ENCODE measurements at regions of chr22 and their contacts with region 1.

Region 1: GRCh38 chr22:38176170-38176741 is 5.4 kb downstream of the PLA2G6 start:
- DNase-seq: peak; percentile 33 to 69
- ATAC-seq: peak in 2 of 3 donors; percentile 15 to 50
- H3K4me3 ChIP-seq: no peak overlapping the region
- H3K4me3 Mint-ChIP-seq: peak overlapping the region; percentile 83
- H3K27ac ChIP-seq: peak overlapping the region; percentile 83
- H3K27ac Mint-ChIP-seq: peak overlapping the region; percentile 87 to 89
- H3K4me1 ChIP-seq: peaks cover 81% of the 10 kb centered on the region
- H3K4me1 Mint-ChIP-seq: peaks cover 62 to 72% of the 10 kb centered on the region in 2 donors
- H3K27me3 ChIP-seq: no peaks in the 10 kb centered on the region
- H3K27me3 Mint-ChIP-seq: no peaks in the 10 kb centered on the region
- CTCF ChIP-seq: no peak

Region 2: DNA sequence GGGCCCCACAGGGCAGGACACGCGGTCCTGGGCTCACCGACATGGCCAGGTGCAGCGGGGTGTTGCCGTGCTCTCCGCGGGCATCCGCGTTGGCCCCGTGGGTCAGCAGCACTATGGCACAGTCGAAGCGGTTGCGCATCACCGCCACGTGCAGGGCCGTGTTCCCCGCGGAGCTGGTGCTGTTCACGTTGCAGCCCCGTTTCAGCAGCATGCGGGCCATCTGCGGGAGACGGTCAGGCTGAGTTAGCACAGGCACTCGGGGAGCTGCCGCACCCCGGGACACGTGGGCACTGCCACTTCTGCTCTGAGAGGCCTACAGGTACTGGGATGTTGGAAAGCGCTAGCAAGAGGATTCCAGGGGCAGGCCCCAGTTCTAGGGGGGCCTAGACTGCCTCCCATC is 43.5 kb before region 1 on chr22:
- intact Hi-C with region 1: no loop called
- DNase-seq: no peak
- ATAC-seq: no peak
- H3K4me3 ChIP-seq: no peak overlapping the region
- H3K4me3 Mint-ChIP-seq: no peak overlapping the region
- H3K27ac ChIP-seq: no peak overlapping the region
- H3K27ac Mint-ChIP-seq: no peak overlapping the region
- H3K4me1 ChIP-seq: peaks cover under 1% of the 10 kb centered on the region
- H3K4me1 Mint-ChIP-seq: peaks cover 9 to 10% of the 10 kb centered on the region in 2 donors
- H3K27me3 ChIP-seq: no peaks in the 10 kb centered on the region
- H3K27me3 Mint-ChIP-seq: no peaks in the 10 kb centered on the region
- CTCF ChIP-seq: no peak

Region 3: DNA sequence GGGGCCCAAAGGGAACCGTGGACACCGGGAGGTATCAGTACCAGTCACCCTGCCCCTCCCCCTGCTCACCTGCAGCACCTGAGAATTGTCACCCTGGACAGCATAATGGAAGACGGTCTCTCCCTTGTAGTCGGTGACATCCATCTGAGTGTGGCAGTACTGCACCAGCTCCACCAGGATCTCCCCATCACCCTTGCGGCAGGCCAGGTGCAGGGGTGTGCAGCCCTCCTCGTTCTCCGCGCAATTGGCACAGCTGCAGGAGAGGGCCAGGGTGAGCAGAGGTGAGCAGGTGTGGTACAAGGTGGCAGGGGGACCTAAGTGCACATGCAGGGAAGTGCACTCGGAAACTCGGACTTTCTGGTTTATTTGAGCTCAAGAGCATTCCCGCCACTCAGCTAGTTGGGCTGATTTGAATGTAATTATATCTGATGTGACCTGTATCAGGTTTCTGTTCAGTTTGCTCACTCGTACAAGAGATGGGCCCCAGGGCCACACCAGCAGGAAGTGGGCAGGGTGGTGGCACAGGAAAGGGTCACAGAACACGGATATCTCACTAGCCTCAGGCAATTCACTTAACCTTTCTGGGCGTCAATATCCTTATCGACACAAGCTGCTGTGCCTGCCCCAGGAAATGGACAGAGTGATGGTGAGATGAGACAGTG is 33.1 kb before region 1 on chr22:
- intact Hi-C with region 1: loop called (anchors 2 kb)
- DNase-seq: peak; percentile 46 to 69
- ATAC-seq: peak; percentile 83 to 94 (median 90)
- H3K4me3 ChIP-seq: peak overlapping the region; percentile 8
- H3K4me3 Mint-ChIP-seq: peak overlapping the region; percentile 77
- H3K27ac ChIP-seq: peak overlapping the region; percentile 99
- H3K27ac Mint-ChIP-seq: peak overlapping the region; percentile 92 to 96
- H3K4me1 ChIP-seq: peaks cover 55% of the 10 kb centered on the region
- H3K4me1 Mint-ChIP-seq: peaks cover 18 to 42% of the 10 kb centered on the region in 2 donors
- H3K27me3 ChIP-seq: no peaks in the 10 kb centered on the region
- H3K27me3 Mint-ChIP-seq: no peaks in the 10 kb centered on the region
- CTCF ChIP-seq: no peak

Region 4: GRCh38 chr22:38201710-38202436 is 25.6 kb after region 1 on chr22 and contains the start of gene MAFF:
- intact Hi-C with region 1: loop called (anchors 1 kb)
- DNase-seq: peak; percentile 86 to 91
- ATAC-seq: peak; percentile 74 to 88 (median 76)
- H3K4me3 ChIP-seq: peak within 1 kb of the TSS; percentile 57
- H3K4me3 Mint-ChIP-seq: peak within 1 kb of the TSS; percentile 86
- H3K27ac ChIP-seq: peak within 1 kb of the TSS; percentile 99
- H3K27ac Mint-ChIP-seq: peak within 1 kb of the TSS; percentile 90 to 96
- H3K4me1 ChIP-seq: peaks cover 53% of the 10 kb centered on the region
- H3K4me1 Mint-ChIP-seq: peaks cover 38 to 65% of the 10 kb centered on the region in 2 donors
- H3K27me3 ChIP-seq: no peaks in the 10 kb centered on the region
- H3K27me3 Mint-ChIP-seq: no peaks in the 10 kb centered on the region
- CTCF ChIP-seq: no peak
- total RNA-seq, gene MAFF: 168 to 215 (median 187) TPM

Region 5: DNA sequence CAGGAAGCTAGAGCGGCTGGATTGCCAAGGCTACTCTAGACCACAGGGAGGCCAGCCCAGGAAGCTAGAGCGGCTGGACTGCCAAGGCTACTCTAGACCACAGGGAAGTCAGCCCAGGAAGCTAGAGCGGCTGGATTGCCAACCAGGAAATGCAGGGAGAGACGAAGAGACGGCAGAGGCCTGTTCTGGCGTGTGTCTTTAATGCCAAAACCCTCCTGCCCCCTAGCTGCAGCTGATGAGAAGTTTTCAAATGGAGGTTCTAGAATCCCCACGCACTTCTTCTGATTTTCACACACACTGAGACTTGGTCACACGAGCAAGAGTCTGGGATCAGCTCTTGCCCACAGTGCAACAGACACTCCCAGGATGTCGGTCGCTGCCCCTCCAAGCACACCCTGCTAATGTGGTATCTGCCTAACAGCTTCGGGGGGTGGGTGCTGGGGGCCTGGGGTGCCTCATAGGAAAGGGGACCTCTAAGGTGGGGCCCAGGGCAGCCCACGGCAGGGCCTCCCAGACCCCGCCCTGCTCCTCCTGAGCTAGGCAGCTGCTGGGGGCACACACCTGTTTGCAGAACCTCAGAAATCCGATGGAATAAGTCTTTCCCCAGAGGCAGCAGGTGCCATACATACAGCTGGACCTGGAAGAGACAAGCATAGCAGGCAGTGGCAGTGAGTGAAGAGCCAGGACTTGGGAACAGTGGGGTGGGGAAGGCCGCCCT is 54.0 kb after region 1 on chr22:
- intact Hi-C with region 1: loop called (anchors 10 kb)
- DNase-seq: peak; percentile 60 to 71
- ATAC-seq: peak; percentile 83 to 86 (median 86)
- H3K4me3 ChIP-seq: no peak overlapping the region
- H3K4me3 Mint-ChIP-seq: peak overlapping the region; percentile 17
- H3K27ac ChIP-seq: peak overlapping the region; percentile 76
- H3K27ac Mint-ChIP-seq: peak overlapping the region; percentile 90 to 92
- H3K4me1 ChIP-seq: peaks cover 35% of the 10 kb centered on the region
- H3K4me1 Mint-ChIP-seq: peaks cover 20 to 35% of the 10 kb centered on the region in 2 donors
- H3K27me3 ChIP-seq: no peaks in the 10 kb centered on the region
- H3K27me3 Mint-ChIP-seq: no peaks in the 10 kb centered on the region
- CTCF ChIP-seq: peak; percentile 60

Region 6: GRCh38 chr22:38262051-38262795 is 86.0 kb after region 1 on chr22:
- intact Hi-C with region 1: loop called (anchors 10 kb)
- DNase-seq: peak; percentile 36 to 56
- ATAC-seq: peak; percentile 29 to 50 (median 49)
- H3K4me3 ChIP-seq: no peak overlapping the region
- H3K4me3 Mint-ChIP-seq: no peak overlapping the region
- H3K27ac ChIP-seq: no peak overlapping the region
- H3K27ac Mint-ChIP-seq: peak overlapping the region; percentile 76 to 80
- H3K4me1 ChIP-seq: peaks cover 63% of the 10 kb centered on the region
- H3K4me1 Mint-ChIP-seq: peaks cover 58 to 67% of the 10 kb centered on the region in 2 donors
- H3K27me3 ChIP-seq: no peaks in the 10 kb centered on the region
- H3K27me3 Mint-ChIP-seq: no peaks in the 10 kb centered on the region
- CTCF ChIP-seq: peak; percentile 27

Region 7: DNA sequence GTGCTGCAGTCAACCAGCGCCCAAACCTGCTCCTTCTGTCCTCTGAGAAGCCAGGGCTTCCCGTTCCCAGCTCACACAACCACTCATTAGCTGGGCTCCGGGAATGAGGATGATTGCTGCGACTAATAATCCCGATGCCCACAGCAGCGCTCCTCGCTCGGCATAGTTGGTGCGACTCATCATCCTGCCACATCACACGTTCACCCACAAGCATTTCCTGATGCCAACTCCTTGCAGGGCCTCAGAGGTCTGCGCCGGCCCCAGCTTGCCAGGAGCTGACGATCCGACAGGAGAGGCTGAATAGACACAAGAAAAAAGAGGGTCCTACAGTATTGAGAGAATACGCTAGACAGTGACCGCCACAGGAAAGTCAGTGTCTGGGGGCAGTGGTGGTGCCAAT is 151.5 kb after region 1 on chr22:
- intact Hi-C with region 1: no loop called
- DNase-seq: peak in 1 of 2 donors; percentile 42
- ATAC-seq: peak; percentile 39 to 63 (median 55)
- H3K4me3 ChIP-seq: no peak overlapping the region
- H3K4me3 Mint-ChIP-seq: peak overlapping the region; percentile 77
- H3K27ac ChIP-seq: no peak overlapping the region
- H3K27ac Mint-ChIP-seq: peak overlapping the region in 1 of 2 donors; percentile 69
- H3K4me1 ChIP-seq: peaks cover 12% of the 10 kb centered on the region
- H3K4me1 Mint-ChIP-seq: peaks cover 8% of the 10 kb centered on the region in 2 donors
- H3K27me3 ChIP-seq: no peaks in the 10 kb centered on the region
- H3K27me3 Mint-ChIP-seq: peaks cover 0 to 3% of the 10 kb centered on the region in 2 donors
- CTCF ChIP-seq: no peak